ENCODE measurements at regions of chr18 and their contacts with region 1.

Region 1: GRCh38 chr18:31252522-31252921 is 65.4 kb upstream of the DSG1 start:
- DNase-seq: no peak
- ATAC-seq: no peak
- H3K4me3 ChIP-seq: no peak overlapping the region
- H3K27ac ChIP-seq: no peak overlapping the region
- H3K4me1 ChIP-seq: peaks cover 0 to 11% of the 10 kb centered on the region in 2 experiments; a peak in 1 of 4 replicates
- H3K27me3 ChIP-seq: no peaks in the 10 kb centered on the region
- CTCF ChIP-seq: no peak
- POLR2A ChIP-seq: no peak
- RAD21 ChIP-seq: no peak

Region 2: GRCh38 chr18:30870466-30870865 is 382.1 kb before region 1 on chr18:
- CTCF ChIA-PET with region 1: no interaction called
- POLR2A ChIA-PET with region 1: no interaction called
- RAD21 ChIA-PET with region 1: no interaction called
- intact Hi-C with region 1: no loop called
- DNase-seq: no peak
- ATAC-seq: no peak
- H3K4me3 ChIP-seq: no peak overlapping the region
- H3K27ac ChIP-seq: no peak overlapping the region
- H3K4me1 ChIP-seq: no peaks in the 10 kb centered on the region
- H3K27me3 ChIP-seq: no peaks in the 10 kb centered on the region
- CTCF ChIP-seq: no peak
- POLR2A ChIP-seq: no peak
- RAD21 ChIP-seq: no peak

Region 3: DNA sequence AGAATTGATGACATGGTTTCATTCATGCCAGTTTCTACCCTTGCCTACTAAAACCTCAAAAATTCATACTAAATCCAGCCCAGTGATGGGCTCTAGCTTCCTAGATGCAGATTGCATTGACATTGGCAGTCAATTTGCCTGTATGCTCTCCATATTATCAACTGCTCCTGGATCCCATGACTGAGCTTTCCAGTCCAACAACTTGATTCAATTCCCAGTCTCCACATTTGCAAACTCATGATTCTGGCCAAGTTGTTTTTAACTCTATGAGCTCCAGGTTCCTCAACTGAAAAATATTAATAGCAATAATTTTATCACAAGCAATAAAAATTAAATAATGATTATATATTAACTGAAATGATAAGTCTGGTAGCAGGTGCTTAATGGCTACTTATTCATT is 38.9 kb before region 1 on chr18:
- CTCF ChIA-PET with region 1: no interaction called
- POLR2A ChIA-PET with region 1: no interaction called
- RAD21 ChIA-PET with region 1: no interaction called
- intact Hi-C with region 1: no loop called
- DNase-seq: no peak
- ATAC-seq: no peak
- H3K4me3 ChIP-seq: no peak overlapping the region
- H3K27ac ChIP-seq: no peak overlapping the region
- H3K4me1 ChIP-seq: no peaks in the 10 kb centered on the region
- H3K27me3 ChIP-seq: no peaks in the 10 kb centered on the region
- CTCF ChIP-seq: no peak
- POLR2A ChIP-seq: no peak
- RAD21 ChIP-seq: no peak

Region 4: DNA sequence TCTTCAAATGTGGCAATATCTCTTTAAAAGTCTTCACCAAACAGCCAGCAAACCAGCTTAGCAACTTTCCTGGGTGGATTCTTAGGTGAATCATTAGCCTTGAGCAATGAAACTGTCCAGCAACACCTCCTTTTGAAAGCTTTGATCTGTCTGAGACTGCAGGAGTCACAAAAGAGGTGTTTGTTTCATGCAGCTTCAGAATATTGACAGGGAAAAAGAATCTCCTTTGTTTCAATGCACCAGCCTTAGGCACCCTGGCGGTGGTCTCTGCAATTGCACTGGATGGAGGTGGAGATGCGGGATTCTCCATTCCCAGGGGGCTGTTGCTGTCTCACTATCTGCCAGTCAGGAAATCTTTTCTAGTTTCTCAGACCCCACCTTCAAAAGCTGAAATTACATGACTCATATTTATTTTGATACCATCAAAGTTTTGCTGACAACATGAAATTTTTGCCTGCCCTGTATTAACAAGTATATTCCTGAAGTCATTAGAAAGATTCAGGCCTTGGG is 10.6 kb before region 1 on chr18:
- CTCF ChIA-PET with region 1: interaction called, 13 read pairs
- POLR2A ChIA-PET with region 1: no interaction called
- RAD21 ChIA-PET with region 1: no interaction called
- intact Hi-C with region 1: no loop called
- DNase-seq: peak; percentile 99
- ATAC-seq: peak; percentile 88
- H3K4me3 ChIP-seq: 0 out of 4 replicates have a peak overlapping the region, but pooled peaks of 1 of the 2 experiments have one; percentile 25
- H3K27ac ChIP-seq: peak overlapping the region; percentile 50; the same call in 1 of the 2 replicates
- H3K4me1 ChIP-seq: peaks cover 49 to 67% of the 10 kb centered on the region in 2 experiments
- H3K27me3 ChIP-seq: no peaks in the 10 kb centered on the region
- CTCF ChIP-seq: peak; percentile 38 to 91 (median 85); a peak in 4 of 6 replicates
- POLR2A ChIP-seq: no peak
- RAD21 ChIP-seq: peak; percentile 64